Common myeloid progenitor, CD34-positive (primary cell): ENCODE measurements at regions of chr7 and their contacts with region 1.

Region 1: DNA sequence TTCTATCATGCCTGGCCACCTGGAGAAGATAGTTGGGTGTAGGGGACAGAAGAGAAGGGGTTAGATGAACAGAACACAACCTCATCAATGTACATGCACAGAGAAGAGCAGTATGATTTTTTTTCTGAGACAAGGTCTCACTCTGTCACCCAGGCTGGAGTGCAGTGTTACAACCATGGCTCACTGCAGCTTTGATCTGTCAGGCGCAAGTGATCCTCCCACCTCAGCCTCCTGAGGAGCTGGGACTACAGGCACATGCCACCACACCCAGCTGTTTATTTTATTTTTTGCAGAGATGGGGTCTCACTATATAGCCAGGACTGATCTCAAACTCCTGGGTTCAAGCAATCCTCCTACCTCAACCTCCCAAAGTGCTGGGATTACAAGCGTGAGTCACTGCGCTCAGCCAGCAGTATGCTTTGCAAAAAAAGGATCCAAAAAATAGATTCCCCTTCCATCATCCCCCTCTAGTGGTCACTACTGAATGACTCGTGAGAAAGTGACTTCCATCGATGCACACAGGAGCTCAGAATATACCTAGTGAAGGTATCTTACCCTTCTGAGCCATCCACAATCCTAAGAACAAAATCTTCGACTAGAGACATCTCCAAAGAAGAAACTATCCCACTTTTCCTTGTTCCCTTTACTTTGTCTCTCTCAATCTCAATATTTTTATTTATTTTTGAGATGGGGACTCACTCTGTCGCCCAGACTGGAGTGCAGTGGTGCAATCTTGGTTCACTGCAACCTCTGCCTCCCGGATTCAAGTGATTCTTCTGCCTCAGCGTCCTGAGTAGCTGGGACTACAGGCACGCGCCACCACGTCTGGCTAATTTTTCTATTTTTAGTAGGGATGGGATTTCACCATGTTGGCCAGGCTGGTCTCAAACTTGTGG is 21.0 kb downstream of the ZCWPW1 start:
- DNase-seq: peak; percentile 73 to 86 (median 81)
- H3K4me3 ChIP-seq: no peak overlapping the region
- H3K27ac ChIP-seq: no peak overlapping the region
- H3K4me1 ChIP-seq: no peaks in the 10 kb centered on the region
- H3K27me3 ChIP-seq: no peaks in the 10 kb centered on the region

Region 2: DNA sequence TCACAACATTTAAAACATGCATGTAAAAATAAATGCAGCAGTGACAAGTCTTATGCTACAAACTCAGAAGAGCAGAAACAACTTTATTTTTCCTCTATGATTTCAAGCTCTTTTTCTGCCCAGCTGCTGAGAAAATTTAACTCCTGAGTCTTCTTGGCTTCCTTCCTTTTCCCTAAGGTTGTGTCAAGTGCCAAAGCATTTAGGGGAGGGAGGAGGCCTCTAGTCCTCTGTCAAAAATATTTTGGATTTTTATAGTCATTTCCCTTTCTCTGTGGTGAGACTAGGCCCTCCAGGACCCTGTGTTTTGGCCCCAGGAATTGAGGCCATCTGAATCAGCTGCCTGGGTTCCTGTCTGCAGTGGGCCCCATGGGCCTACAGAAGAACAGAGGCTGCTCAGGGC is 60.6 kb before region 1 on chr7:
- CTCF ChIA-PET with region 1: interaction called, 15 read pairs
- POLR2A ChIA-PET with region 1: no interaction called
- DNase-seq: no peak
- H3K4me3 ChIP-seq: no peak overlapping the region
- H3K27ac ChIP-seq: peak overlapping the region in 1 of 2 experiments; percentile 18
- H3K4me1 ChIP-seq: peaks cover 0 to 2% (median 1%) of the 10 kb centered on the region in 4 experiments
- H3K27me3 ChIP-seq: no peaks in the 10 kb centered on the region

Region 3: GRCh38 chr7:100358027-100358865 is 49.3 kb before region 1 on chr7 and contains the start of gene PILRB:
- CTCF ChIA-PET with region 1: interaction called, 28 read pairs
- POLR2A ChIA-PET with region 1: no interaction called
- DNase-seq: no peak
- H3K4me3 ChIP-seq: no peak within 1 kb of the TSS
- H3K27ac ChIP-seq: peak within 1 kb of the TSS in 1 of 2 experiments; percentile 31
- H3K4me1 ChIP-seq: peaks cover 0 to 5% (median 0%) of the 10 kb centered on the region in 4 experiments
- H3K27me3 ChIP-seq: no peaks in the 10 kb centered on the region

Region 4: DNA sequence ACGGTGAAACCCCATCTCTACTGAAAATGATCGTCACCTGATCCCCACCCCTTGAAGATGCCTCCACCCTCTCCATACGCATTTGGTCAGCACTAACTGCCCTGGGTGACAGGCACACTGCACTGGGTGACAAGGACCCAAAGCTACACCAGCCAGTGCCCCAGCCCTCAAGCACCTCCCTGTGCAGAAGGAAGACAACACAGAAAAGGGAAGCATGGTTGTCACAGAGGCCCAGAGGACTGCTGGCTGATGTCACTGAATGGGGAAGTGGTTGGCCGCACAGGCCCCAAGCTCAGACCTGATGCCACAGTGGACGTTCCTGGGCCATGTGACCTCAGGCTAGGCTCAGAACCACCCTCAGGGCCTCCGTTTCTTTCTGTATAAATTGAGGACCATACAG is 38.4 kb before region 1 on chr7:
- CTCF ChIA-PET with region 1: interaction called, 13 read pairs
- POLR2A ChIA-PET with region 1: interaction called, 3 read pairs
- DNase-seq: peak; percentile 93 to 98 (median 97)
- H3K4me3 ChIP-seq: peak overlapping the region in 1 of 7 experiments; percentile 21
- H3K27ac ChIP-seq: peak overlapping the region; percentile 70 to 77
- H3K4me1 ChIP-seq: peaks cover 7 to 89% (median 59%) of the 10 kb centered on the region in 4 experiments
- H3K27me3 ChIP-seq: no peaks in the 10 kb centered on the region

Region 5: GRCh38 chr7:100418930-100419659 is 11.6 kb after region 1 on chr7:
- CTCF ChIA-PET with region 1: interaction called, 17 read pairs
- POLR2A ChIA-PET with region 1: no interaction called
- DNase-seq: no peak
- H3K4me3 ChIP-seq: no peak overlapping the region
- H3K27ac ChIP-seq: no peak overlapping the region
- H3K4me1 ChIP-seq: peaks cover 0 to under 1% (median 0%) of the 10 kb centered on the region in 4 experiments
- H3K27me3 ChIP-seq: no peaks in the 10 kb centered on the region

Region 6: GRCh38 chr7:100680167-100680575 is 272.6 kb after region 1 on chr7:
- CTCF ChIA-PET with region 1: no interaction called
- POLR2A ChIA-PET with region 1: no interaction called
- DNase-seq: no peak
- H3K4me3 ChIP-seq: no peak overlapping the region
- H3K27ac ChIP-seq: no peak overlapping the region
- H3K4me1 ChIP-seq: peaks cover 0 to 7% (median 6%) of the 10 kb centered on the region in 4 experiments
- H3K27me3 ChIP-seq: no peaks in the 10 kb centered on the region